ENCODE measurements at regions of chr1 and their contacts with region 1.

Region 1: GRCh38 chr1:151934048-151934493 is 24.8 kb upstream of the THEM4 start:
- DNase-seq: peak in 6 of 7 donors; percentile 38 to 60 (median 48)
- H3K4me3 ChIP-seq: no peak overlapping the region
- H3K27ac ChIP-seq: no peak overlapping the region
- H3K4me1 ChIP-seq: no peaks in the 10 kb centered on the region
- H3K27me3 ChIP-seq: no peaks in the 10 kb centered on the region
- CTCF ChIP-seq: peak; percentile 65 to 88 (median 82)
- POLR2A ChIP-seq: no peak

Region 2: GRCh38 chr1:151994956-151995355 is 60.9 kb after region 1 on chr1:
- intact Hi-C with region 1: loop called (anchors 2 to 5 kb)
- DNase-seq: peak; percentile 47 to 75 (median 61)
- H3K4me3 ChIP-seq: no peak overlapping the region
- H3K27ac ChIP-seq: peak overlapping the region in 4 of 5 donors; percentile 20 to 85 (median 61)
- H3K4me1 ChIP-seq: peaks cover 23 to 48% of the 10 kb centered on the region in 2 donors
- H3K27me3 ChIP-seq: no peaks in the 10 kb centered on the region
- CTCF ChIP-seq: no peak
- POLR2A ChIP-seq: no peak